ENCODE measurements at regions of chr4 and their contacts with region 1.

Region 1: GRCh38 chr4:184016759-184017668 is 111.9 kb downstream of the STOX2 start:
- DNase-seq: peak; percentile 84
- ATAC-seq: peak; percentile 84
- H3K4me3 ChIP-seq: no peak overlapping the region
- H3K27ac ChIP-seq: peak overlapping the region; percentile 100
- H3K4me1 ChIP-seq: peaks cover 12% of the 10 kb centered on the region
- H3K27me3 ChIP-seq: no peaks in the 10 kb centered on the region
- CTCF ChIP-seq: no peak
- POLR2A ChIP-seq: no peak
- RAD21 ChIP-seq: no peak

Region 2: DNA sequence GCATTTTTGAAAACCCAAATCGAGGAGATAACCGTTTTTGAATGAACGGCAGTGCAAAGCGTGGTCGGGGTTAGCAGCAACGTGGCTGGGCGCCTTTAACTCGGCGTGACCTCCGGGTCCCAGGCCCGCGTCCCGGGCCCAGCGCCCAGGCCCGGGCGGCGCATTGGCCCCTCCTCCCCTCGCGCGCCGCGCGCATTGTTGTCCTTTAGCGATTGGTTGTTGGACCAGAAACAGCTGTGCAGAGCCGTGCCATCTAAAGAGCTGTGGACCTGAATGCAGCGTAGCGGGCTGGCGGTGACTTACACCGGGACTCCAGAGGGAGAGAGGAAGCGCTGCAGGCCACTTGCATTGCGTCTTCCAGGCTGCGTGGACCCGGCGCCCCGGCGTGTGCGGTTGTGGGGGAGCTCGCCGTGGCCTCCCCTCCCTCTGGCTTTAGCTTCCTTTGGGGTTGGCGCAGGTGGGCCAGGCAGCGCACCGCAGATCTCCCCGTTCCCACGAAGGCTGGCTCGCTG is 111.9 kb before region 1 on chr4 and contains the start of gene STOX2:
- CTCF ChIA-PET with region 1: no interaction called
- POLR2A ChIA-PET with region 1: no interaction called
- dilution Hi-C with region 1: no loop called
- in situ Hi-C with region 1: no loop called
- intact Hi-C with region 1: loop called (anchors 5 kb)
- DNase-seq: peak; percentile 55
- ATAC-seq: peak; percentile 79
- H3K4me3 ChIP-seq: peak within 1 kb of the TSS; percentile 60
- H3K27ac ChIP-seq: peak within 1 kb of the TSS; percentile 41
- H3K4me1 ChIP-seq: no peaks in the 10 kb centered on the region
- H3K27me3 ChIP-seq: peaks cover 16% of the 10 kb centered on the region
- CTCF ChIP-seq: no peak
- POLR2A ChIP-seq: no peak
- RAD21 ChIP-seq: no peak
- total RNA-seq, gene STOX2: 4.4 and 5.4 TPM in 2 replicates

Region 3: DNA sequence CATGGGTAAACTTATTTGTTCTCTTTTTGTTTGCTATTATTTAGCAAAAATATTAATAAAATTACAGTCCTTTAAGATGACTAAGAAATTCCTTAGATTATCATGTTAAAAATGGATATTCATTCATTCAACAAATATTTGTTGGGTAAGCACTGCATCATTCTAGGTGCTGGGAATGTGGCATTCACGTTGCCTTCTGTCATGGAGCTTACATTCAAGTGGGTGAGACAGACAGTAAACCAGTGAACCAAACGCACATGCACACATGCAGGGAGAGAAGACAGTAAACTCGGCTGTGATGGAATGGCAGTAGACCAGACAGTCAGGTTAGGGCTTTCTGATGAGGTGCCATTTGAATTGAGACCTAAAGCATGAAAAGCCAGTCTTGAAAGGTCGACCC is 20.1 kb before region 1 on chr4:
- CTCF ChIA-PET with region 1: interaction called, 3 read pairs
- POLR2A ChIA-PET with region 1: no interaction called
- dilution Hi-C with region 1: no loop called
- in situ Hi-C with region 1: no loop called
- intact Hi-C with region 1: loop called (anchors 1 kb)
- DNase-seq: peak; percentile 90
- ATAC-seq: peak; percentile 66
- H3K4me3 ChIP-seq: no peak overlapping the region
- H3K27ac ChIP-seq: peak overlapping the region; percentile 79
- H3K4me1 ChIP-seq: peaks cover 17% of the 10 kb centered on the region
- H3K27me3 ChIP-seq: no peaks in the 10 kb centered on the region
- CTCF ChIP-seq: no peak
- POLR2A ChIP-seq: no peak
- RAD21 ChIP-seq: no peak

Region 4: GRCh38 chr4:184100297-184100885 is 83.4 kb after region 1 on chr4:
- CTCF ChIA-PET with region 1: interaction called, 4 read pairs
- POLR2A ChIA-PET with region 1: no interaction called
- dilution Hi-C with region 1: no loop called
- in situ Hi-C with region 1: no loop called
- intact Hi-C with region 1: loop called (anchors 5 kb)
- DNase-seq: peak; percentile 26
- ATAC-seq: peak; percentile 75
- H3K4me3 ChIP-seq: no peak overlapping the region
- H3K27ac ChIP-seq: peak overlapping the region; percentile 80; the same call in 1 of the 2 replicates
- H3K4me1 ChIP-seq: peaks cover 14% of the 10 kb centered on the region; the same call in 1 of the 2 replicates
- H3K27me3 ChIP-seq: no peaks in the 10 kb centered on the region; the same call in 1 of the 2 replicates
- CTCF ChIP-seq: peak; percentile 83
- POLR2A ChIP-seq: no peak
- RAD21 ChIP-seq: peak; percentile 88

Region 5: DNA sequence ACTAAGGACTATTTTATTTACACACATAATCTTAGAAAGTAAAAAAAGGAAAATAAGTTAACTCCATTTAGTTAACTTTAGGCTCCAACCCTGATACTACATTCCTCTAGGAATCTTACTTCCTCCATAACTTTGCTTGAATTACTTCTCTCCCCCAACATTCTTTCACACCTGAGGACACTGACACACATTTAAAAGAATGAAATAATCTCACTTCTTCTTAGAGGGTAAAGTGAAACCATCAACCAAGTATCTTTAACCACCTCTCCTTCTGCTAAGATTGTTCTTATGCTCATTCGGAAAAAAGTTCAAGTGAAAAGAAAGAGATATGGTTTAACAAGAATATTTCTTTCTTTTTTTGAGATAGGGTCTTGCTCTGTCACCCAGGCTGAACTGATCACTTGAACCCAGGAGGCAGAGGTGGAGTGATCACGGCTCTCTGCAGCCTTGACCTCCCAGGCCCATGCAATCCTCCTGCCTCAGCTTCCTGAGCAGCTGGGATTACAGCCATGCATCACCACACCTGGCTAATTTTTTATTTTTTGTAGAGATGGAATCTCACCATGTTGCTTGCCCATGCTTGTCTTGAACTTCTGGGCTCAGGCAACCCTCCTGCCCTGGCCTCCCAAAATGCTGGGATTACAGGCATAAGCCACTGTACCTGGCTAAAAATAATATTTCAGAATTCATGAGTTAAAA is 1154.5 kb after region 1 on chr4:
- CTCF ChIA-PET with region 1: no interaction called
- POLR2A ChIA-PET with region 1: no interaction called
- dilution Hi-C with region 1: no loop called
- in situ Hi-C with region 1: no loop called
- intact Hi-C with region 1: no loop called
- DNase-seq: no peak
- ATAC-seq: no peak
- H3K4me3 ChIP-seq: no peak overlapping the region
- H3K27ac ChIP-seq: no peak overlapping the region
- H3K4me1 ChIP-seq: peaks cover 2% of the 10 kb centered on the region; the same call in 1 of the 2 replicates
- H3K27me3 ChIP-seq: no peaks in the 10 kb centered on the region
- CTCF ChIP-seq: no peak
- POLR2A ChIP-seq: no peak
- RAD21 ChIP-seq: no peak

Measured in IMR-90 (cell line).